Ascending aorta (tissue), 2 donors: ENCODE measurements at regions of chr19 and their contacts with region 1.

Region 1: DNA sequence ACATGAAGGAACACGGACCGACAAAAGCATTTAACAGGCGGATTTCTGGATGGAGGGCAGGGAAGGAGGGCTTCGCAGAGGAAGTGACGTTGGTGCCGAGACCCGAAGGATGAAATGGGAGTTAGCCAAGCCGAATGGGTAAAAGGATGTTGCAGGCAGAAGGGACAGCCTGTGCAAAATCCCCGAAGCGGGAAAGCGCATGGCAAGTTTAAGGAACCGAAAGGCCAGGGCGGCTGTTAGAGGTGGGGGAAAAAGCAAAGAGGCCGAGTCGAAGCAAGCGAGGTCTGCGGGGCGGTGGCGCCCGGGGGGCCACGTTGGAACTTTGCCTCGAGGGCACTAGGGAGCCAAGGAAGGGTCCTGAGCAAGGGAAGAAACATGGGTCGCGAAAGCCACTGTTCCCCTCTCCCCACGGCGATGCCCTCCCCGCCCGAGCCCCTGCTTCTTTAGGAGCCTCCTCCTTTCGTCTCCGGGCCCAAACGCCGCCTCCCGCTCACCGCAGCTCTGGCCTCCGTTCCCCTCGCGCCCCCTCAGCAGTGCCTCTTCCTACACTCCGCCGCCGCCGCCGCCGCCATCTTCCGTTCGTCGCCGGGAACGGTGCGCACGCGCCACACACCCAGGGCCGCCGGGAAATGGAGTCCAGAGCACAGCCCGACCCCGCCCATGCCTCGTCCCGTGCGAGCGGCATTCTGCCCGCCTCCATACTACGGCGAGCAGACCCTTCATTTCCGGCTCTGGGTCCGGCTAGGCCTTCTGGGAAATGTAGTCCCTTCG is at the start of gene SYMPK:
- DNase-seq: peak; percentile 95 to 99
- H3K4me3 ChIP-seq: peak within 1 kb of the TSS; percentile 73 to 88
- H3K27ac ChIP-seq: peak within 1 kb of the TSS; percentile 79 to 94
- H3K4me1 ChIP-seq: peaks cover 4 to 15% of the 10 kb centered on the region in 2 donors
- H3K27me3 ChIP-seq: peaks cover 9% of the 10 kb centered on the region
- CTCF ChIP-seq: no peak
- total RNA-seq, gene SYMPK: 103 TPM

Region 2: DNA sequence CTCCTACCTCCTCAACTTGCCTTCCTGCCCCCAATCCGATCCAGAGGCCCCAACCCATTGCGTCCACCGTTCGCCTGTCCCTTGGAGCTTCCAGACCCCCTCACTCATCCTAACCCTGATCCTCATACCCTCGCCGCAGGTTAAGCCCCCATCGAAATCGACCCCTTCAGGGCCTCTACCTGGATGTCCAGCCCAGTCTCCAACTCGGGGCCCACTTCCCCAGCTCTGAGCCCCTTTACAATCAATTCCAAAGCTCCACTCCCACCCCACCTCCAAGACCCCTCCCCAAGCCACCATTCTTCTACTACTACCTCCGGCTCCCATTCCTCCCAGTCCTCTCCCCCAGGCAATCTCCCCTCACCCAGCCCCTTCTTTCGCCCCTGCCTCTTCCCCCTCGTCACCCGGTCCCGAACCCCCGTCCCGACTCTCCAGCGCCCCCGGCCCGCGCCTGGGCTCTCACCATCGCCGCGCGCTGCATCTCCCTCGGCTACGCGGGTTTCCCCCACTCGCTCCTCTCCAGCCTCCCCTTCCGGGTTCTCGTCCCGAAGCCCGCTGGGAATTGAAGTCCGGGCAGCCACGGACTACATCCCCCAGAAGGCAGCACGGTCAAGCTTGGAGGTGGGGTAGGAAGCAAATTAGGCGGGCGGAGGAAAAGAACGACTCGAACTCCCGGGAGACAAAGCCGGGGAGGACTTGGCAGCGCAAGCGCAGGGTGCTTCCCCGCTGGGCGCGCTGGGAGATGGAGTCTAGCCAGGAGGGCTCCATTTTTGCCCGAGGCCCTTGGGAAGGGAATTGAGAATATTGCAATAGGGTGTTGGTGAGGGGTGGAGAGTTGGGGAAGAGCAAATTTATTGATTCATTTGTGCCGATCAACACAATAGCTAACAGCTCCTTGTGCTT is 132.1 kb before region 1 on chr19 and contains the start of gene FBXO46:
- intact Hi-C with region 1: loop called (anchors 2 kb)
- DNase-seq: peak; percentile 95 to 99
- H3K4me3 ChIP-seq: peak within 1 kb of the TSS; percentile 88 to 89
- H3K27ac ChIP-seq: peak within 1 kb of the TSS; percentile 48 to 56
- H3K4me1 ChIP-seq: peaks cover 0 to 10% of the 10 kb centered on the region in 2 donors
- H3K27me3 ChIP-seq: no peaks in the 10 kb centered on the region
- CTCF ChIP-seq: peak in 1 of 3 experiments; percentile 9
- total RNA-seq, gene FBXO46: 27.5 TPM

Region 3: GRCh38 chr19:45817010-45817724 is 45.6 kb before region 1 on chr19:
- intact Hi-C with region 1: loop called (anchors 2 kb)
- DNase-seq: peak; percentile 59 to 96
- H3K4me3 ChIP-seq: no peak overlapping the region
- H3K27ac ChIP-seq: no peak overlapping the region
- H3K4me1 ChIP-seq: peaks cover 0 to 4% of the 10 kb centered on the region in 2 donors
- H3K27me3 ChIP-seq: no peaks in the 10 kb centered on the region
- CTCF ChIP-seq: peak; percentile 94 to 99 (median 95)

Region 4: GRCh38 chr19:45886427-45887199 is 23.9 kb after region 1 on chr19:
- intact Hi-C with region 1: loop called (anchors 1 kb)
- DNase-seq: peak; percentile 64 to 96
- H3K4me3 ChIP-seq: peak overlapping the region; percentile 71 to 95
- H3K27ac ChIP-seq: peak overlapping the region; percentile 87 to 88
- H3K4me1 ChIP-seq: peaks cover 22 to 37% of the 10 kb centered on the region in 2 donors
- H3K27me3 ChIP-seq: no peaks in the 10 kb centered on the region
- CTCF ChIP-seq: no peak

Region 5: DNA sequence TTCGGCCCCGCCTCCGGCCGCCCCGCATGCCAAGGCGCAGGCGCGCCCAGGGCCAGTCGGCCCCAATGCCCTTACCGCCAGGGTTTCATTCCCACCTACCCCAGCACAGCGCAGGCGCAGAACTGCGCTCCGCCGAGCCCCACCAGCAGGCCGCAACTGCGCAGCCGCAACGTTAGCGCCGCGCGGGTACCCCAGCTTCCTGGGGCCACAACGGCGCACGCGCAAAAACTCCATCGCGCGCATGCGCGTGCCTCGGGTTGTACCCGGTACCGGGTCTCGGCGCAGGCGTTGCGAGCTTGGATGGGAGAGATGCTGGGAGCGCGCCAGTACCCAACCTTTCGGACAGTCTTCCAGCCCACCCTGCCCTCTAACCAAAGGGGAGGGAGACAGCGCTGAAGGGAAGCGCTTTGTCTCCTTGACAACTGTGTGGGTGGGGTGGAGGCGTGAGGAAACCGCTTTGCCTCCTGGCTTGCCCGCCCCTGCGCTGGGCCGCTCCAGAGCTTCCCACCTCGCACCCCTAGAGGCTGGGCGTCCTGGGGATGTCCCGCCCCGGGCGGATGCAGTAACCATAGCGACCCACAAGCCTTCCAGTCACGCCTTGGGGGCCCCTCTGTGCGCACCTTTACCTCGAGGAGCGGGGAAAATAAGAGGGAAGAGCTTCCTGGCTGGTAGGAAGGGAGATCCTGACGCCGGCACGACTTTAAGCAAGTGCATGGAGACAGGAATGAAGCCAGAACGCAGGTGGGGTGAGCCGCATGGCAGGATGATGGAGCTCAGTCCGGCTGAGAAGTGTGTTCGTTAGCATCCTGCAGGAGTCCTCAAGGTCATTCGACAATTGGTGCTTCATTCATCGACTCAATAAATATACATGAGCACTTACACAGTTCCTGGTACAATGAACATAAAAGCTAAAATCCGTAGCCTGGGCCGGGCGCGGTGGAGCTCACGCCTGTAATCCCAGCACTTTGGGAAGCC is 40.2 kb after region 1 on chr19:
- intact Hi-C with region 1: loop called (anchors 2 kb)
- DNase-seq: peak; percentile 88 to 99
- H3K4me3 ChIP-seq: peak overlapping the region; percentile 72 to 86
- H3K27ac ChIP-seq: peak overlapping the region; percentile 39 to 57
- H3K4me1 ChIP-seq: peaks cover 7 to 9% of the 10 kb centered on the region in 2 donors
- H3K27me3 ChIP-seq: no peaks in the 10 kb centered on the region
- CTCF ChIP-seq: no peak

Region 6: DNA sequence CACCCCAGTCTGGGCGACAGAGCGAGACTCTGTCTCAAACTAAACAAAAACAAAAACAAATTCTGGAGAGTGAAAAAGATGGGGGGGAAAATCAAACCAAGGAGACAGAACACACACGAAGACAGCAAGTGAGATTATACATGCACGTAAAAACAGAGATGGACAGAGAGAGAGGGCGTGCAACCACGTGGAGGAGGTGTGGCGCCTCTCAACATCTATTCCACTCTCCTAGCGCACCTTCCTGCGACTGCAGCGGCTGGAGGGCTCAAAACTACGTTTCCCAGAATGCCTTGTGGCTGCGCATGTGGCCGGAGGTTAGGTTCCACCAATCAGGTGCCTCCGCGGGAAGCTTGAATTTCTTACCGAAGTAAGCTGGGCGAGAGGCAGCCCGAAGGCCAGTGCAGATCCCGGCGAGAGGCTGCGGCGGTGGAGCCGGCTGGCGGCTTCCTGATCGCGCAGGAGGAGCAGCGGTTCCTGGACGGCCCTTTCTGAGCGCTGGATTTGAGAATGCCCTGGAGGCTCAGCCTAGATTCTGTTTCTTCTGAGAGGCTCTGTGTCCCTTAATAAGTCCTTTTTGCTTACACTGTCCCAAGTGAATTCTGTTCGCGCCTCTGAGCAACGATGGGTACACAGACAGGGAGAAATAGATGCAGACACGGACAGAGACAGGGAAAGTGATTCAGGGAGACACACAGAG is 65.0 kb after region 1 on chr19:
- intact Hi-C with region 1: loop called (anchors 2 kb)
- DNase-seq: peak; percentile 34 to 91
- H3K4me3 ChIP-seq: no peak overlapping the region
- H3K27ac ChIP-seq: no peak overlapping the region
- H3K4me1 ChIP-seq: peaks cover 0 to 3% of the 10 kb centered on the region in 2 donors
- H3K27me3 ChIP-seq: no peaks in the 10 kb centered on the region
- CTCF ChIP-seq: peak in 1 of 3 experiments; percentile 8

Region 7: DNA sequence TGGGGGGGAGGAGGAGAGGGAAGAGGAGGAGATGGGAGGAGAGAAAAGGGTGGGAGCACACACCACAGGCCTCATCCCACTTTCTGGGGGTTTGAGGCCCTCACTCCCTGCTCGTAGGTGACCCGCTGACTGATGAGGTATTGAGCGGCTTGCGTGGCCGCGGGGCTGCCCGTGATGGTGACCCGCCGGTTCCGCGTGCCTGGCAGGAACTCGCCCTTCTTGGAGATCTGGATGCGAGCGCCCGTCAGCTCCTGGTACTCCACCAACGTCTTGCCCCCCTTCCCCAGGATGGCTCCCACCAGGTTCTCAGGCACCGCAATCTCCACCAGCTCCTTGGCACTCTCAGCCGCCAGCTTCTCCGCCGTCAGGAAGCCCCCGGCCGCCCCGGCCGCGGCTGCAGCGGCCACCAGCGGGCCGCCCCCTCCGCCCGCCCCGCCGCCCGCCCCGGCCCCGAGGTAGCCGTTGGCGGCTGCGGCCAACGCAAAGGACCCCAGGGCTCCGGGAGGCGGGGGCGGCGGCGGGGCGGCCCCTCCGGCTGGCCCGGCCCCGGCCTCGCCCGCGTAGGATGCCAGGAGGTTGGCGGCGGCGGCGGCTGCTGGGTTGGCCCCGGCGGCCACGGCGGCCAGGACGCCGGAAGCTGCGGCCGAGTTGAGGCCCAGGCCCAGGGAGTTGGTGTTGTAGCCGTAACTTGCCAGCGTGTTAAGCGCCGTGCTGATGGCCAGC is 77.2 kb after region 1 on chr19:
- intact Hi-C with region 1: no loop called
- DNase-seq: no peak
- H3K4me3 ChIP-seq: no peak overlapping the region
- H3K27ac ChIP-seq: no peak overlapping the region
- H3K4me1 ChIP-seq: no peaks in the 10 kb centered on the region
- H3K27me3 ChIP-seq: no peaks in the 10 kb centered on the region
- CTCF ChIP-seq: no peak

Region 8: DNA sequence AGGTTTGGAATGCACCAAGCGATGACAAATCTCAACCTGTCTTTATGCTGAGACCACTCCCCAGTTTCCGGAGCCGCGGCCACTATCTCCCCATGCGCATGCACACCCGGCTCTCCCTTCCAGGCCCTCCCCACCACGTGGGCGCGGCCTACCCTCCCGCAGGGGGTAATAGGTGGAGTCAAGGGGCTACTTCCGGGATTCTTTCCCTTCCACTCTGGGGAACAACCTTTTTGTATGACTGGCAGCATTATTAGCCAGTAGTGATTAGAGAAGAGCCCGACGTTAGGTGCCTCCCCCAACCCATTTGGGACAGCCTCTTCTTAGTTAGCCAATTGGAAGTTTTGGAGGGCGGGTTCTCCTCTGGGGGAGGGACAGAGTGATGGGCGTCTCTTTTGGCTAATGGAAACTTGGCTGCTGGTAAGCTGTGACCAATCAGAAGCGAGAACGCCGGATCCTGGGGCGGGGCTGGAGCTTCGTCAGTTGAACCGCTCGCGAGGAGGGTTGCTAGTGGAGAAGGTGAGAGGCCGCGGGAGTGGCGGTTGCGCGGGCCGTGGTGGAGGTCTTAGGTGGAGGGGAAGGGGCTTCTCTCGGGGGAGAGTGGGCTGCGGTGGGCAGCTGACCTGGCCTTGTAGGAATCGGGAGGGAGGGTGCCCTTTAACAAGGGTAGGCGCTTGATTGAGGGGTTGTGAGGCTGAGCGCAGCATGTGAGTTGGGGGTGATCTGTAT is 132.4 kb after region 1 on chr19 and contains the start of gene CCDC61:
- intact Hi-C with region 1: loop called (anchors 2 kb)
- DNase-seq: peak; percentile 87 to 97
- H3K4me3 ChIP-seq: peak within 1 kb of the TSS; percentile 85 to 91
- H3K27ac ChIP-seq: peak within 1 kb of the TSS; percentile 66 to 69
- H3K4me1 ChIP-seq: peaks cover 0 to 6% of the 10 kb centered on the region in 2 donors
- H3K27me3 ChIP-seq: no peaks in the 10 kb centered on the region
- CTCF ChIP-seq: no peak
- total RNA-seq, gene CCDC61: 13.7 TPM